Esophagus muscularis mucosa (tissue), 4 donors: ENCODE measurements at regions of chr12 and their contacts with region 1.

Region 1: GRCh38 chr12:27940756-27941402 is 31.7 kb downstream of the PTHLH start:
- DNase-seq: no peak
- H3K4me3 ChIP-seq: no peak overlapping the region
- H3K27ac ChIP-seq: no peak overlapping the region
- H3K4me1 ChIP-seq: no peaks in the 10 kb centered on the region
- H3K27me3 ChIP-seq: no peaks in the 10 kb centered on the region
- CTCF ChIP-seq: peak; percentile 69 to 84 (median 76)
- EP300 ChIP-seq: no peak
- POLR2A ChIP-seq: no peak

Region 2: GRCh38 chr12:27733052-27733656 is 207.7 kb before region 1 on chr12:
- intact Hi-C with region 1: loop called (anchors 5 kb)
- DNase-seq: no peak
- H3K4me3 ChIP-seq: no peak overlapping the region
- H3K27ac ChIP-seq: no peak overlapping the region
- H3K4me1 ChIP-seq: no peaks in the 10 kb centered on the region
- H3K27me3 ChIP-seq: no peaks in the 10 kb centered on the region
- CTCF ChIP-seq: peak; percentile 83 to 86 (median 85)
- EP300 ChIP-seq: no peak
- POLR2A ChIP-seq: no peak

Region 3: GRCh38 chr12:27785882-27786570 is 154.9 kb before region 1 on chr12:
- intact Hi-C with region 1: no loop called
- DNase-seq: no peak
- H3K4me3 ChIP-seq: no peak overlapping the region
- H3K27ac ChIP-seq: no peak overlapping the region
- H3K4me1 ChIP-seq: peaks cover 20 to 98% (median 91%) of the 10 kb centered on the region in 4 donors
- H3K27me3 ChIP-seq: no peaks in the 10 kb centered on the region
- CTCF ChIP-seq: no peak
- EP300 ChIP-seq: no peak
- POLR2A ChIP-seq: no peak

Region 4: GRCh38 chr12:27821259-27821973 is 119.5 kb before region 1 on chr12:
- intact Hi-C with region 1: loop called (anchors 10 kb)
- DNase-seq: no peak
- H3K4me3 ChIP-seq: no peak overlapping the region
- H3K27ac ChIP-seq: no peak overlapping the region
- H3K4me1 ChIP-seq: peaks cover 0 to 10% (median 2%) of the 10 kb centered on the region in 4 donors
- H3K27me3 ChIP-seq: no peaks in the 10 kb centered on the region
- CTCF ChIP-seq: peak; percentile 78 to 89 (median 87)
- EP300 ChIP-seq: no peak
- POLR2A ChIP-seq: no peak

Region 5: GRCh38 chr12:27840244-27840999 is 100.5 kb before region 1 on chr12:
- intact Hi-C with region 1: no loop called
- DNase-seq: no peak
- H3K4me3 ChIP-seq: no peak overlapping the region
- H3K27ac ChIP-seq: no peak overlapping the region
- H3K4me1 ChIP-seq: peaks cover 0 to 3% (median 1%) of the 10 kb centered on the region in 4 donors
- H3K27me3 ChIP-seq: no peaks in the 10 kb centered on the region
- CTCF ChIP-seq: peak in 2 of 3 experiments; percentile 26 to 28
- EP300 ChIP-seq: no peak
- POLR2A ChIP-seq: no peak

Region 6: DNA sequence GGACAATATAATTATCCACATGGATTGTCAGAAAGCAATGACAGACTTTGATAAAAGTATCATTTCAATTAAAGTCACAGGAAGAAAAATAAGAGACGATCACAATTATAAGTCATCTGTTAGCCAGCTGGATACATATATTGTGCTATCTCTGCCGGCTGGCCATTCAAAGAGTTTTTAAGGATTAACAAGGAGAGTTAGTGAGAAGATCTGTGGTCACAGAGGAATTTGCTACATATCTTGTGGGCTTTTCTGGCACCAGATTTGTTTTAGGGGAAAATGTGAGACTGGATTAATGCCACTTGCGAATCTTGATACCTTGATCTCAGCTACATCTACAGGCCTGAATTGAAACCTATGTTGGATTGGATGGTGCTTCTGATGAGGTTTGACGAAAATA is 69.9 kb before region 1 on chr12:
- intact Hi-C with region 1: no loop called
- DNase-seq: no peak
- H3K4me3 ChIP-seq: no peak overlapping the region
- H3K27ac ChIP-seq: no peak overlapping the region
- H3K4me1 ChIP-seq: no peaks in the 10 kb centered on the region
- H3K27me3 ChIP-seq: no peaks in the 10 kb centered on the region
- CTCF ChIP-seq: no peak
- EP300 ChIP-seq: no peak
- POLR2A ChIP-seq: no peak